Activated naive CD4-positive, alpha-beta T cell treated with anti-CD3 and anti-CD28 coated beads, Interleukin-2, amount 10 ng/mL, durations not matched to agents 7 days and 5 days (primary cell): ENCODE measurements at regions of chr1 and their contacts with region 1.

Region 1: GRCh38 chr1:25099343-25099951 is 132.9 kb downstream of the SYF2 start:
- DNase-seq: peak; percentile 58
- H3K4me3 Mint-ChIP-seq: peak overlapping the region; percentile 23
- H3K27ac Mint-ChIP-seq: peak overlapping the region; percentile 80
- H3K4me1 Mint-ChIP-seq: peaks cover 73% of the 10 kb centered on the region
- H3K27me3 Mint-ChIP-seq: peaks cover 40% of the 10 kb centered on the region

Region 2: GRCh38 chr1:24421502-24421901 is 677.9 kb before region 1 on chr1:
- CTCF ChIA-PET with region 1: no interaction called
- DNase-seq: no peak
- H3K4me3 Mint-ChIP-seq: no peak overlapping the region
- H3K27ac Mint-ChIP-seq: peak overlapping the region; percentile 65
- H3K4me1 Mint-ChIP-seq: peaks cover 62% of the 10 kb centered on the region
- H3K27me3 Mint-ChIP-seq: no peaks in the 10 kb centered on the region

Region 3: GRCh38 chr1:24847995-24848881 is 251.2 kb before region 1 on chr1:
- CTCF ChIA-PET with region 1: interaction called, 40 read pairs
- DNase-seq: peak; percentile 92
- H3K4me3 Mint-ChIP-seq: peak overlapping the region; percentile 64
- H3K27ac Mint-ChIP-seq: peak overlapping the region; percentile 74
- H3K4me1 Mint-ChIP-seq: peaks cover 22% of the 10 kb centered on the region
- H3K27me3 Mint-ChIP-seq: peaks cover 48% of the 10 kb centered on the region

Region 4: GRCh38 chr1:24897767-24898483 is 201.5 kb before region 1 on chr1:
- CTCF ChIA-PET with region 1: interaction called, 10 read pairs
- DNase-seq: peak; percentile 62
- H3K4me3 Mint-ChIP-seq: peak overlapping the region; percentile 32
- H3K27ac Mint-ChIP-seq: no peak overlapping the region
- H3K4me1 Mint-ChIP-seq: peaks cover 7% of the 10 kb centered on the region
- H3K27me3 Mint-ChIP-seq: peaks cover 4% of the 10 kb centered on the region

Region 5: DNA sequence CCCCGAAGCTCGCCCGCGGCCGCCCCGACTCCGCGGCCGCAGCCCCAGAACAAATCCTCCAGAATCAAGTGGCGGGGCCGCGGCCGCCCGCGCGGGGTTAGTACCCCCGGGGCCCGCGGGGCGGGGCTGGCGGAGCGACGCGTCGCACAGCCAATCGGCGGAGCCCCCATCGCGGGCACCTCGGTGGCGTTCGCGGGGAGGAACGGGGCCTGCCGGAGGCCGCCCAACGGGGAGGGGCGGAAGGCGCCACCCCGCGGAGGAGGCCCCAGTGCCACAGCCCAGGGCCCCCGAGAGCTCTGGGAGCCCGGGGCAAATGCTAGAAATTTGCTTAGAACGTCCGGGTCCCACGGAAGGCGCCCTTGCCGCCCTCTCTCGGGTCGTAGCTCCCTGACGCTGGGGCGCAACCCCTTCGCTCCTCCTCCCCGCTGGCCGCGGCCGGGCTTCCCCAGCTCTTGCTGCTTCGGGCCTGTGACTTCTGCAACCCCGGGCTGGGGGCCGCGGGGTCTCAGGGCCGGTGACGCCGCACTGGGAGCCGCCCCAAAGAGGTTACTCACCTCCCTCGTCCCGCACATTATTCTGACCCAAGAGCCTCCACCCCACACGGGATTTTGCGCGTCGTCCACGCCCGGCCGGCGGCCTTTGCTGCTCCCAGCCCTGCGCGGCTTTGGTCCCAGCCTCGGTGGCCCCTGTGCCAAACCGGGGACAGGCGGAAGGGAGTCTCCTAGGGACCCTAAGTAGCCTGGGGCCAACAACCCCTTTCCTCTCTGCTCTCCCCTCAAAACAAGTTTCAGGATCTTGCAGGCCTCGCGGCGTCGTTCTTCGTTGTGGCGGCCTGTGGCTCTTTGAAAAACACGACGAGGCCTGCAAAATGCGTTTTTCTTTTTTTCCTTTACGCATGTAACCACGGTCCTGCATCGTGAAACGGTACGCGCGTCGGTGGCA is 169.0 kb before region 1 on chr1 and contains the start of gene RUNX3:
- CTCF ChIA-PET with region 1: interaction called, 19 read pairs
- DNase-seq: peak; percentile 93
- H3K4me3 Mint-ChIP-seq: peak within 1 kb of the TSS; percentile 93
- H3K27ac Mint-ChIP-seq: peak within 1 kb of the TSS; percentile 93
- H3K4me1 Mint-ChIP-seq: peaks cover 68% of the 10 kb centered on the region
- H3K27me3 Mint-ChIP-seq: no peaks in the 10 kb centered on the region

Region 6: GRCh38 chr1:25031966-25032667 is 67.3 kb before region 1 on chr1:
- CTCF ChIA-PET with region 1: interaction called, 57 read pairs
- DNase-seq: peak; percentile 71
- H3K4me3 Mint-ChIP-seq: no peak overlapping the region
- H3K27ac Mint-ChIP-seq: peak overlapping the region; percentile 90
- H3K4me1 Mint-ChIP-seq: peaks cover 77% of the 10 kb centered on the region
- H3K27me3 Mint-ChIP-seq: peaks cover 7% of the 10 kb centered on the region

Region 7: DNA sequence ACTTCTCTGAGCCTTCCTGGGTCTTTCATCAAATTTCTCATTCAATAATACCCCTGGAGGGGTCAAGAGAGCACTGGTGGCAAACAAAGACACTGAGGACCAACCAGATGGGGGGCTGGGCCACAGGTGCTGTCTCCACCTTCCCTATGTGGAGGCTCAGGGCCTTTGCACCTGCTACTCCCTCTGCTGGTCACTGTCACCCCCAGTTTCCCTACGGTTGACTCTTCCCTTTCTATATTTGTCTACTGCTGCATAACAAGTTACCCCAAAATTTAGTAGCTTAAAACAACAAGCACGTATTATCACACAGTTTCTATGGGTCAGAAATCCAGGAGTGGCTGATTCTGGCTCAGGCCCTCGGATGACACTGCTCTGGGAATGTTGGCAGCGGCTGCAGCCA is 30.6 kb before region 1 on chr1:
- CTCF ChIA-PET with region 1: interaction called, 10 read pairs
- DNase-seq: peak; percentile 57
- H3K4me3 Mint-ChIP-seq: no peak overlapping the region
- H3K27ac Mint-ChIP-seq: no peak overlapping the region
- H3K4me1 Mint-ChIP-seq: peaks cover 4% of the 10 kb centered on the region
- H3K27me3 Mint-ChIP-seq: peaks cover 74% of the 10 kb centered on the region